ENCODE measurements at regions of chr14 and their contacts with region 1.

Region 1: DNA sequence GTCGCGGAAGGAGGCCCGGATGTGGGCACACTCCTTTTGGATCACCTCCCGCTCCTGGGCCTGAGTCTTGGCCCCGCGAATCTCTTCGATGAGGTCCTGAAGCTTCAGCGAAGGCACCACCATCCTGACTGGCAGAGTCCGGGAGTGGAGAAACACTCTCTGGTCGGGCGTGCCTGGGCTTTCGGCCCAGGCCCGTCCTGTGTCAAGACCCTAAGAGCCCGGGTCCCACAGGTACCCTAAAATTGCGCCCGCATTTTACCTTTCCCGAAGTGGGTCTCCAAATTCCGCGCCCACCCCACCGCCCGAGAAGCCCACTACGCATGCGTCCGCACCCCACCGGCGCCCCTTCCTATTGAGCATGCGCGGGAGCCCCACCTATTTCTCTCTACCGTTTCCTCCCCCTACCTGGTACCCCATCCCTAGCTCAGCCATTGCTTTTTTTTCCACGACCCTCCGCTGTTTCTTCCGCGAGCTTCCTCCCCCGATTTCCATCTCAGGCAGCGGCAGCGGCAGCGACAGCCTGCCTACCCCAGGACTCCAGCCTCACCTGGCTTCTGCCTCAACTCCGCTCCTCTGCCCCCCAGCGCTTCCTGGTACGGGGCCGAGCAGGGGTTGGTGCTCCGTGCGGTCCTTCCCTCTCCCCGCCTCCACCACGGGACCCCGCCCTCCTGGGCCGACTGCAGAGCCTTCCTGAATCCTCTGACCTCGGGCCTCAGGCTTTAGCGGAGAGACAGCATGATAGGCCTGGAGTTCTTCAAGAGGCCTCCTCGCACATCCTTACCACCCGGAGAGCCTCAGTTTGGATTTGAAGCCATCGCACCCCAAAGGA is at the start of gene AP1G2:
- DNase-seq: peak; percentile 91
- ATAC-seq: peak; percentile 72
- total RNA-seq, gene AP1G2: 10.7 TPM

Region 2: DNA sequence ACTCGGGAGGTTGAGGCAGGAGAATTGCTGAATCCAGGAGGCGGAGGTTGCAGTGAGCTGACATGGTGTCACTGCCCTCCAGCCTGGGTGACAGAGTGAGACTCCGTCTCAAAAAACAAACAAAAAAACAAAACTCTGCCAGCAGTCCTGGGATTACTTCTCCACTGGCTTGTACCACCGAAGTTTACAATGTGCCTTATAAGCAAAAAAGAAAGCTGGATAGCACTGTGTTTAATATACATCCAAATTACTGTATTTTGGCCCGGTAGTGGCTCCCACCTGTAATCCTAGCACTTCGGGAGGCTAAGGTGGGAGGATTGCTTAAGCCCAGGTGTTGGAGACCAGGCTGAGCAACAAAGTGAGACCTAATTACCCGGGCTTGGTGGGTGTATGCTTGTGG is 298.2 kb before region 1 on chr14:
- intact Hi-C with region 1: loop called (anchors 10 kb)
- DNase-seq: no peak
- ATAC-seq: no peak

Region 3: DNA sequence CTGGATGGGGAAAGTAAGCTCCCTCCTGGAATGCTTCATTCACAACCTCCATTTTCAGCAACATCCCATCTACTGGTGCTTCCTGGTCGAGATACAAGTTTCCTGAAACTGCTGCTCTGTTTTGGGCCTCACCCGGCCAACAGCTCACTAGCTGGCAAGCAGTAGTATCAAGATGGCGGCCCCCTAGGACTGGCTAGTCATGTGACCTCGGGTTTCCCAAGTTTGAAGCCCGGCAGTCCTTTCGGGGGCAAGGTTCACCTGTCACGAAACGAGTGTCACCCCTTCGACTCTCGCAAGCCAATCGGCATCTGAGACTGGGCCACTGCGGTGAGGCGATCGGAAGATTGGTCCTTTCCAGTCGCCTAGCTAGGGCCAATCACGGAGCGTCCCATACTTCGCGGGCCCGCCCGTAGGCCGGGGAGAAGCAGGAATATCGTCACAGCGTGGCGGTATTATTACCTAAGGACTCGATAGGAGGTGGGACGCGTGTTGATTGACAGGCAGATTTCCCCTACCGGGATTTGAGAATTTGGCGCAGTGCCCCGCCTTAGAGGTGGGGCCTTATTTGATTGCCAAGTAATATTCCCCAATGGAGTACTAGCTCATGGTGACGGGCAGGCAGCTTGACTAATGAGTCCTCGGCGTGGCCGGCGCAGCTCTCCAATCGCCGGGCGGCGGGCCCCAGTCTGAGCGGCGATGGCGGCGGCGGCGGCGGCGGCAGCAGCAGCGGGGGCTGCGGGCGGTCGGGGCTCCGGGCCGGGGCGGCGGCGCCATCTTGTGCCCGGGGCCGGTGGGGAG is 246.4 kb before region 1 on chr14 and contains the start of gene PABPN1:
- intact Hi-C with region 1: loop called (anchors 10 kb)
- DNase-seq: peak; percentile 98
- ATAC-seq: peak; percentile 95
- total RNA-seq, gene PABPN1: 67.7 TPM

Region 4: GRCh38 chr14:23478111-23478759 is 89.2 kb before region 1 on chr14:
- intact Hi-C with region 1: loop called (anchors 1 kb)
- DNase-seq: peak; percentile 53
- ATAC-seq: peak; percentile 69

Region 5: DNA sequence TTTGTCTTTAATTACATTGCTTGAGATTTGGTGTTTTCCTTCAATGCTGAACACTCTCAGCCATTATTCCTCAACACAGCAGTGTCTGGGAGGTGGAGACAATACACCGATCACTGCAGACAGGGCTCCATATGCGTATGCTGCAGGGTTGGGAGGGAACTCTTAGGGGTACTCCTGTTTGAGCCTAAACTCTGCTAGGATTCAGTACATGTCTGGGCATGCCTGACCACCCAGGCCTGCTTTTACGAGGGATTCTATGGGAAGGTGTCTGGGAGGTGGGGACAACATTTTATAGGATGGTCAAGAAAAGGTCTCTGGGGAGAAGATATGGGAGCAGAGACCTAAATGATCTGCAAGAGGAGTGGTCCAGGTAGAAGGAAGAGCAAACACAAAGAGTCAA is 103.1 kb after region 1 on chr14:
- intact Hi-C with region 1: no loop called
- DNase-seq: no peak
- ATAC-seq: no peak